ENCODE measurements at regions of chr3 and their contacts with region 1.

Region 1: GRCh38 chr3:132535575-132536441 is 61.3 kb upstream of the ACKR4 start:
- H3K4me3 Mint-ChIP-seq: no peak overlapping the region
- H3K27ac Mint-ChIP-seq: no peak overlapping the region
- H3K4me1 Mint-ChIP-seq: peaks cover under 1% of the 10 kb centered on the region
- H3K27me3 Mint-ChIP-seq: no peaks in the 10 kb centered on the region

Region 2: GRCh38 chr3:132435911-132436425 is 99.8 kb before region 1 on chr3:
- intact Hi-C with region 1: no loop called
- H3K4me3 Mint-ChIP-seq: no peak overlapping the region
- H3K27ac Mint-ChIP-seq: peak overlapping the region; percentile 70
- H3K4me1 Mint-ChIP-seq: peaks cover 39% of the 10 kb centered on the region
- H3K27me3 Mint-ChIP-seq: no peaks in the 10 kb centered on the region

Region 3: GRCh38 chr3:132641837-132642538 is 106.2 kb after region 1 on chr3:
- intact Hi-C with region 1: loop called (anchors 1 kb)
- H3K4me3 Mint-ChIP-seq: no peak overlapping the region
- H3K27ac Mint-ChIP-seq: no peak overlapping the region
- H3K4me1 Mint-ChIP-seq: peaks cover 10% of the 10 kb centered on the region
- H3K27me3 Mint-ChIP-seq: no peaks in the 10 kb centered on the region